ENCODE measurements at regions of chr7 and their contacts with region 1.

Region 1: GRCh38 chr7:88637795-88638194 is 121.7 kb upstream of the ZNF804B start:
- DNase-seq: no peak
- H3K4me3 ChIP-seq: no peak overlapping the region
- CTCF ChIP-seq: no peak
- POLR2A ChIP-seq: no peak

Region 2: DNA sequence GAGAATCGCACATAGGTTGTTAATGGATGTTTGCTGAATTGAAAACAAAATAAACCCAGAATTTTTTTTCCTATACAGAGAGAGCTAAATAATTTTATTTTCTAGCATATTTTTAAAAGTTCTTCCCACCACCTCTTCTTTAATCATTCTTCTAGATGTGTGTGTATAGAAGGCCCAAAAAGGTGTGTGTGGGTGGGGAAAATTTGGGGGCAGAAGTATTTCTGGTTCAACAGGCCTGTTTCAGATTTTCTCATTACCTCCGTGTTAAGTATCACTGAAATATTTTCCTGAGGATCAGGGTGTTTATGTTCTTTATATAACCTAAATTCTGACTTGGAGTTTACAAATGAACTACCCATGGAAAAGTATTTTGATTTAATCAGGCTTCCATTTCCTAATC is 22.5 kb before region 1 on chr7:
- intact Hi-C with region 1: loop called (anchors 2 kb)
- DNase-seq: no peak
- H3K4me3 ChIP-seq: no peak overlapping the region
- CTCF ChIP-seq: no peak
- POLR2A ChIP-seq: no peak